Body of pancreas (tissue), 4 donors: ENCODE measurements at regions of chr1 and their contacts with region 1.

Region 1: DNA sequence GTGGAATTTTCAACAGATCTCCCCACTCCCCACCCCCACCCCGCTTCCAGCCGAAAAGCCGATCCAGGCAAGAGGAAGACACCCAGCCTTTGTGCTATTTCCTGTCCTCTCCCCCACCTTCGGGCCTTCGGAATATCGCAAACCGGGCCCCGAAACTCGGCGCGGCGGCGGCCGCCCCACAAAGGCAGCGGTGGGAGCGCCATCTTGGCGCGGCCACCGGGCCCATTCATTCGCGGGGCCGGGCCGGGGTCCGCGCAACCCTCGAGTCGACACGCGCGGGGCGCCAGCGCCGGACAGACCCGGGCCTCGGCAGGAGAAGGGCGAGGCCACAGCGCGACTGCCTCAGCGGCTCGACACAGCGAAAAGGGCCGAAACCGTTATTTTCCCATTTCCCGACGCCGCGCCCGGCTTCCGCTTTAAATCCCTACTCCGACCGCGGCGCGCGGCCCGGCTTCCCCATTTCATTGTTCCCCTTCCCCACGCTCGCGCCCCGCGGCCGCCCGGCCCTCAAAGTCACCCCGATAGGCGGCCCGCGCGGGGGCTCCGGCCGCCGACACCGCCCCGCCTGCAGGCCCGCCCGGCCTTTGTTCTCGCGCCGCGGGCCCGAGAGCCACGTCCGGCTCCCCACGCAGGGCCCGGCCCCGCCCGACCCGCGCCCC is 911 bp downstream of the GNB1 start:
- DNase-seq: peak in 3 of 4 donors; percentile 42 to 55 (median 44)
- ATAC-seq: peak; percentile 22
- H3K4me3 ChIP-seq: peak overlapping the region; percentile 71 to 81
- H3K27ac ChIP-seq: peak overlapping the region; percentile 76 to 96 (median 86)
- H3K4me1 ChIP-seq: peaks cover 59% of the 10 kb centered on the region
- H3K27me3 ChIP-seq: no peaks in the 10 kb centered on the region
- CTCF ChIP-seq: no peak
- POLR2A ChIP-seq: peak in 1 of 3 donors; percentile 11

Region 2: DNA sequence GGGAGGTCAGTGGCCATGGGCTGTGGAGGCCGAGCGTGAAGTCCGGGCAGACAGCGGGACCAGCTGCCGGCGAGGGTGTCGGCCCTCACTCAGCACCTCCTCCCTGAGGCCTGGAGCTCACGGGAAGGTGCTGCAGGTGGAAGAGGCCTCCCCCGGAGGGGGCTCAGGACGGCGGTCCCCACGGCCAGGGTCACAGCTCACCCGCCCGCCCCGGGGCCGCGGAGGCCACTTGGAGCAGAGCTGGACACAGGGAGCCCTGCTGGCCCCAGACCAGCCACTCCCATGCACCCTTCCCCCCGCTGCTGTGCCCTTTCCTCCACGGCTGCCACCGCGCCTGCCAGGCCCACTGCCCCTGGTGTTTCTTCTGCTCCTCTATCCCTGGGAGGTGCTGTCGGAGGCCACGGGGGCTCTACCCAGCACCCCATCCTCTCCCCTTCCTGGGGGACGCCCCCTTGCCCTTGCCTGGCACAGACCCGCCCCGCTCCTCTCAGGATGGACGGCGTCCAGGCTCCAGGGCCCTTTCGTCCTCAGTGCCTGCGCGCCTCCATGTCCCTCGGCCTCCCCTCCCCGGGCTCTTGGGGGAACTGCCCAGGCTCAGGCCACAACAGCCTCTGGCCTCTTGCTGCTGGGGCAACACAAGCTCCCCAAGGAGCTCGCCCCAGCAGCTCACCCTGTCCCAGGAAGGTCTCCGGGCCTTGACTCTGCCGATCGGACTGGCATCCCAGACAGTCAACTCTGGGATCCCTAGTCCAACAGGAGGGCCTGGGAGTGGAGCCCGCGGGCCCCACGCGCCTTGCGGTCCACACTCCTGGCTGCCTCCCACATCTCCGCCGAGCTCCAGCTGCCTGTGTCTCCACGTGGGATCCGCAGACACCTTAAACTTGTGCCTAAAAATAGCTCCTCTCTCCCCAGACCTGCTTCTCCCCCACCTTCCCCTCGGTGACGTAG is 353.7 kb before region 1 on chr1:
- intact Hi-C with region 1: no loop called
- DNase-seq: no peak
- ATAC-seq: no peak
- H3K4me3 ChIP-seq: no peak overlapping the region
- H3K27ac ChIP-seq: no peak overlapping the region
- H3K4me1 ChIP-seq: peaks cover 12% of the 10 kb centered on the region
- H3K27me3 ChIP-seq: no peaks in the 10 kb centered on the region
- CTCF ChIP-seq: no peak
- POLR2A ChIP-seq: no peak

Region 3: GRCh38 chr1:1788646-1789431 is 101.1 kb before region 1 on chr1:
- intact Hi-C with region 1: loop called (anchors 5 kb)
- DNase-seq: peak in 2 of 4 donors; percentile 30 to 48
- ATAC-seq: no peak
- H3K4me3 ChIP-seq: no peak overlapping the region
- H3K27ac ChIP-seq: no peak overlapping the region
- H3K4me1 ChIP-seq: no peaks in the 10 kb centered on the region
- H3K27me3 ChIP-seq: no peaks in the 10 kb centered on the region
- CTCF ChIP-seq: peak in 2 of 7 experiments; percentile 21 to 26
- POLR2A ChIP-seq: no peak

Region 4: DNA sequence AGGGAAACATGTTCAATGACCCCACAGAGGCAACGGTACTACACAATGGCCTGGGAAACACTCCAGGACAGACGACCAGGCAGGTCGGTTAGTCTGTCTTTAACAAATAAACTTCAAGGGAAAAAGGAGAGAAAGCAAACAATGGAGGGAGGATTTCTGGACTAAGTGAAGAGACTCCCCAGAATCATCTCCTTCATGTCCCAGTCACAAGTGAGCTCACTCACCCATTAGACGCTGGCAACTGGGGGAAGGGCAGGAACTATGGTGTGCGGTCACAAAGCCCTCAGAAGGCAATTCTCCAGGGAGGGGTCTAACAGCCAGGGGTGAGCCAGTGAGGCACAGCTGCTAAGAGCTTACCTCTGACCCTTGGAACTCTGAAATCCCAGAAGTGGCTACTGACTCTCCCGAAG is 56.1 kb before region 1 on chr1:
- intact Hi-C with region 1: loop called (anchors 10 kb)
- DNase-seq: no peak
- ATAC-seq: no peak
- H3K4me3 ChIP-seq: no peak overlapping the region
- H3K27ac ChIP-seq: no peak overlapping the region
- H3K4me1 ChIP-seq: peaks cover 17% of the 10 kb centered on the region
- H3K27me3 ChIP-seq: no peaks in the 10 kb centered on the region
- CTCF ChIP-seq: no peak
- POLR2A ChIP-seq: no peak